Calu3 (cell line): ENCODE measurements at regions of chr13 and their contacts with region 1.

Region 1: GRCh38 chr13:80132741-80133601 is 208.0 kb downstream of the SPRY2 start:
- DNase-seq: peak; percentile 16
- H3K4me3 Mint-ChIP-seq: peak overlapping the region; percentile 55
- H3K27ac Mint-ChIP-seq: peak overlapping the region; percentile 89
- H3K4me1 Mint-ChIP-seq: peaks cover 7% of the 10 kb centered on the region
- H3K27me3 Mint-ChIP-seq: no peaks in the 10 kb centered on the region
- CTCF ChIP-seq: no peak

Region 2: GRCh38 chr13:79775830-79776229 is 357.1 kb before region 1 on chr13:
- CTCF ChIA-PET with region 1: no interaction called
- intact Hi-C with region 1: loop called (anchors 5 kb)
- DNase-seq: peak; percentile 12
- H3K4me3 Mint-ChIP-seq: no peak overlapping the region
- H3K27ac Mint-ChIP-seq: no peak overlapping the region
- H3K4me1 Mint-ChIP-seq: no peaks in the 10 kb centered on the region
- H3K27me3 Mint-ChIP-seq: no peaks in the 10 kb centered on the region
- CTCF ChIP-seq: no peak

Region 3: DNA sequence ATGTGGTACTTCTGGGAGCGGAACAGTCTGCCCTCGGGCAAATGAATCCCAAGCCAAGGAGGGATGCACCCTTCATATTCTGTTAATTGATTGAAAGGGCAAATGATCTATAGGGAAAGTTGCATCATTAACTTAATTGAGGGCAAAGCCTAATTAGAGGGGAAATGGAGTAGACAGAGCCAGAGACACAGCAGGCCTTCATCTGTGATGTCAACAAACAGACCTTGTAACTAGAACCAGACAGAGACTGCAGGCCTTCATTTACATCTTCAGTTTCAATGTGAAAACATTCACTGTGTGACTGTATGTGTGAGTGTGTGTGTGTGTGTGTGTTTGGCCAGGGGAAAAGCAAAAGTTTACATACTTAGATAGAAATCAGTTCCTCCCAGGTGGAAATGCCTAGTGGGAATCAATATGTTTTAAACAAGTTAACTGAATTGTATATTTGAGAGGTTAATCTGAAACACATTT is 81.6 kb after region 1 on chr13:
- CTCF ChIA-PET with region 1: no interaction called
- intact Hi-C with region 1: loop called (anchors 10 kb)
- DNase-seq: no peak
- H3K4me3 Mint-ChIP-seq: no peak overlapping the region
- H3K27ac Mint-ChIP-seq: no peak overlapping the region
- H3K4me1 Mint-ChIP-seq: peaks cover 16% of the 10 kb centered on the region
- H3K27me3 Mint-ChIP-seq: no peaks in the 10 kb centered on the region
- CTCF ChIP-seq: no peak

Region 4: DNA sequence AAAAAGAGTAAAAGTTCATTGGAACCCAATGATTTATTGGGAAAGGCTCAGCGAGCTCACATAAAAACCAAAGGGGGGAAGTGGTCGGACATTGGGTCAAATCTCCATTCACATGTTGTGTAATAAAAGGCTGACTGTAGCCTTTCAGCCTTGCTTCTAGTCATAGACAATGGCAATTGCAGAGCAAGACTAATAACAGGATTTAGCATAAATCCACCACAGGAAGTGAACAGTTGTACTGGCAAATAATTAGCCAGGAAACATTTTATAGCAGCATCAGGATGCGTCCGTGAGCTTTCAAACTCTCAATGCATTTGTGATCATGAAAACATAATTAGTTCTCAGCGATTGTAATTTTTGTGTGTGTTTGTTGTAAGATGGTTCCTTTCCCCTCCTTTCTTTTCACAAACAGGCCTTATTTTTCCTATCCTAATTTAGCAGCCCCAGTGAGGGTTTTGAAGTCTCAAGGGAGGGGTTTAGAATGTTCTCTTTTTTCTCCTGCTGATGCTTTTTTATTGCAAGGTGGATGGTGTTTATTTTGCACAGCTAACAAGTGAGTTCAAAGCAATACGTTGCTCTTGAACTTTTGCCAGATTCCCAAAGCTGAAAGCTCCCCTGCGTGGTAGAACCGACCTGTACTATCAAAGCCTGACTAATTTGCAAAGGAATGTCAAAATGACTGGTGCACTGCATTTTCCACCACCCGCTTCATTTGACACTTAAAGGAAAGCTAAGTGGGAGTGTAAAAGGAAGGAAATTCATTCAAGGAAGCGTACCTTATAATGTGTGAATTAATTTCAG is 102.4 kb after region 1 on chr13:
- CTCF ChIA-PET with region 1: no interaction called
- intact Hi-C with region 1: loop called (anchors 5 kb)
- DNase-seq: peak; percentile 1
- H3K4me3 Mint-ChIP-seq: peak overlapping the region; percentile 30
- H3K27ac Mint-ChIP-seq: no peak overlapping the region
- H3K4me1 Mint-ChIP-seq: peaks cover 18% of the 10 kb centered on the region
- H3K27me3 Mint-ChIP-seq: no peaks in the 10 kb centered on the region
- CTCF ChIP-seq: no peak

Region 5: DNA sequence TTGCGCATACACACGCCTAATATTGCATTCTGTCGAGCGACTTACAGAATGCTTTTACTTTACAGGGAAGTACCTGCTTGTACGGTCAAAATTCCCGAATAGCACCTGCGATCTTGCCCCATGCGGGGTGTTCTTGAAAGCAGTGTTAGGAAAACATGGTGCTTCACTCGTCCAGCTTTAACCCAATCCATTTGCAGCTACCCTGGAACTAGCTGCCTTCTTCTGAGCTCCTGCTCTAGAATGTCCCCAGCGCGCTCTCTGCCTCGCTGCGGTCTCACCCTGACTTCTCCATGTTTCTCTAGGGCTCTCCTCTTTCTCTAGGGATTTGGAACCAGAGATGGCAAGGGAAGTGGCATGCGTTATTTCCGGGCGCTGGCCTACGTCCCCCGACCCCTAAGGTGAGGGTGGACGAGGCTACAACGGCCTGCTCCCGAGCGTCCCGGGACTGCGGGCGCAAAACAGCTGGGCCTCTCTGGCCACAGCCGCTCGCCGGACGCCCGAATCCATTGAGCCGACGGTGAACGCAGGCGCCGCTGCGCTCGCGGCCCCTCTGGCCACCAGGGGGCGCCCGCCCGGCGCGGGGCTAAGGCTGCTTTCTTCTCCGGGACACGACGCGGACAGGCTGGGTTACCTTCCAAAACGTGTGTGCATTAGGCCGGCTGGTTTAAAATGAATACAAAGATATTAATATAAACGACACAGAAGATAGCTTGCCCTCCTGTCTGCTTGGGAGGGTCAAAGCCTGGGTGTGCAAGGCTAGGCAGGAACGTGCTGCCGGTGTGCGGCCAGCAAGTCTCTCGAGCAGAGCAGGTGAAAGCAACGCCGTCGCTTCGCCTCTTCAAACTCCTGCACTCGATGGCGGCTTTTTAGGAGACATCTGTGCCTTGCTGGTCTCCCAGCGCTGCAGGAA is 209.8 kb after region 1 on chr13:
- CTCF ChIA-PET with region 1: no interaction called
- intact Hi-C with region 1: loop called (anchors 5 kb)
- DNase-seq: peak; percentile 73
- H3K4me3 Mint-ChIP-seq: no peak overlapping the region
- H3K27ac Mint-ChIP-seq: no peak overlapping the region
- H3K4me1 Mint-ChIP-seq: no peaks in the 10 kb centered on the region
- H3K27me3 Mint-ChIP-seq: no peaks in the 10 kb centered on the region
- CTCF ChIP-seq: peak; percentile 50